GM10248 (cell line): ENCODE measurements at regions of chr7 and their contacts with region 1.

Region 1: DNA sequence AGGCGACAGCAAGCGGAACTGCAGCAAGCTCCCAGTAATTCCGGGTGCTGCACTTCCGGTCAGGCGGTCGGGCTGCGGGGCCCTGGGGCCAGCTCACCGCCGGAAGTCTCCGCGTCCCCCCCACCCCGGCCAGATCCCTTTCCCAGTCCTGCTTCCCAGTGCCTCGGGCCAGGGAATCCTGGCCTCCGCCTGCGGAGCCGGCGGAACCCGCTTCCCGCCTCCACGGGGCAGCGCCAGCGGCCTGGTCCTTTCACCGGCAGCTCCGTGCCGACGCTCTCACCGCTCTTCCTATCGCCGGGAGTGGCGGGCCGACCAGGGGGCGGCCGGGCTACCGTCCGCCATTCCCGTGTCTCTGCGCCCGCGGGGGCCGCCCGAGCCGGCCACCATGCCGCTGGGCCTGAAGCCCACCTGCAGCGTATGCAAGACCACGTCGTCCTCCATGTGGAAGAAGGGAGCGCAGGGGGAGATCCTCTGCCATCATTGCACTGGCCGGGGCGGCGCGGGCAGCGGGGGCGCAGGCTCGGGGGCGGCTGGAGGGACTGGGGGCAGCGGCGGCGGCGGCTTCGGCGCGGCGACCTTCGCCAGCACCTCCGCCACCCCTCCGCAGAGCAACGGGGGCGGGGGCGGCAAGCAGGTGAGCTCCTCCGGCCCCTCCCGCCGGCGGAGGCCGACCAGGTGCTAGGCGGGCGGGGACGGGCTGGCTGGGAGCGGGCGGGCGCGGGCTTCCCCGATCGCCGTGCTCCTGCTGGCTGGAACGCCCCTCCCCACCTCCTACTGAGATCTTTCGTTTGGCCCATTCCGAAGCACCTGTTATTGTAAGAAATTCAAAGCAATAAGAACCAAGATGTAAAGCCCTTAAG is at the start of gene GATAD1:
- DNase-seq: peak; percentile 90
- CTCF ChIP-seq: peak; percentile 93

Region 2: DNA sequence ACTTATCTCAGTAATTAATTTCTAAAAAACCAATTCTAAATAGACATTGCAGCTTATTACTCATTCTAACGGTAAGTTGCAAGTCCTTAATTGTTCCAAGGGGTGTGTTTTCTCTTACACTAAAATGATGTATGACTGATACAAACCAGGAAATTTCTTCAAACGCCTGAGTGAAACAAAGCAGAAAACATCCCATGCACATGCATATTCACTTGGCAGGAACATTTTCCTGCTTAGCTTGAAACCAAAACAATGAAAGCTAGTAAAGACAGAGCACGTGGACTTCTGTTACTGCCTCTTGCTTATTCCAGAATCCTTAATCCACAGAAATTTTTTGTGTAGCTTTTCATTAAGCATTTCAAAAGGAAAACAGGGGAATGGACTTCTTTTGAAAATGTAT is 754.8 kb before region 1 on chr7:
- CTCF ChIA-PET with region 1: no interaction called
- POLR2A ChIA-PET with region 1: no interaction called
- DNase-seq: no peak
- CTCF ChIP-seq: no peak

Region 3: DNA sequence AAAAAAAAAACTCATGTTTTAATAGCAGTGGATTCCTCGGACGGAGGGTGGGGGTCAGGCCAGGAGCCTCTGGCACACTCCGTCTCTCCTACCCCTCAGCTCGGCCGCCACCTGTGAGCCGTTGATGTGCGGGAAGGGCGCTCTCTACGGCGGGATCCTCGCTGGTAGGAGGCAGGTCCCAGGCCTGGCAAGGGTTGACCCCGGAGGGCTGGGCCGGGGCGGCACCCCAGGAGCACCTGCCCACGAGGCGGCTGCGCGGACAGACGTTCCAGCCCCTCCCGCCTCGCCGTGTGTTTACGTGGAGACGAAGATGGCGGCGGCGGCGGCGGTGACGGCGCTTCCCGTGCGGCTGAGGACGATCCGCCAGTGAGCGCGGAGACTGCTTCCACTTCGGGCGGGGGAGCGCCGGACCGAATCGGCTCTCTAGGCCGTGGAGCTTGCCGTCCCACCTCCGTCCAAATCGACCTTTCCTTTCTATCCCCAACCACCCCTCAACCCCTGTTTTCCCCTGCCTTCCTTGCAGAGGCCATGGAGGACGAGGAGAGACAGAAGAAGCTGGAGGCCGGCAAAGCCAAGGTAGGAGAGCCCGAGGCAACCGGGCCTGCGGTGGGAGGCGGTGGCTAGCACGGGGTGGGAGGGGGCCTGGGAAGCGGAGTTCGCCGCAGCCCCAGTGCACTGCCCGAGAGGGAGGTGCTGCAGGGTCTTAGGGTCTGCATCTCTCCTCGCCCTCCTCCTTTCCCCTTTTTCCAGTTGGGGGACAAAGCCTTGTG is 506.8 kb before region 1 on chr7 and contains the start of gene AKAP9:
- CTCF ChIA-PET with region 1: interaction called, 10 read pairs
- POLR2A ChIA-PET with region 1: no interaction called
- DNase-seq: peak; percentile 92
- CTCF ChIP-seq: peak; percentile 5

Region 4: DNA sequence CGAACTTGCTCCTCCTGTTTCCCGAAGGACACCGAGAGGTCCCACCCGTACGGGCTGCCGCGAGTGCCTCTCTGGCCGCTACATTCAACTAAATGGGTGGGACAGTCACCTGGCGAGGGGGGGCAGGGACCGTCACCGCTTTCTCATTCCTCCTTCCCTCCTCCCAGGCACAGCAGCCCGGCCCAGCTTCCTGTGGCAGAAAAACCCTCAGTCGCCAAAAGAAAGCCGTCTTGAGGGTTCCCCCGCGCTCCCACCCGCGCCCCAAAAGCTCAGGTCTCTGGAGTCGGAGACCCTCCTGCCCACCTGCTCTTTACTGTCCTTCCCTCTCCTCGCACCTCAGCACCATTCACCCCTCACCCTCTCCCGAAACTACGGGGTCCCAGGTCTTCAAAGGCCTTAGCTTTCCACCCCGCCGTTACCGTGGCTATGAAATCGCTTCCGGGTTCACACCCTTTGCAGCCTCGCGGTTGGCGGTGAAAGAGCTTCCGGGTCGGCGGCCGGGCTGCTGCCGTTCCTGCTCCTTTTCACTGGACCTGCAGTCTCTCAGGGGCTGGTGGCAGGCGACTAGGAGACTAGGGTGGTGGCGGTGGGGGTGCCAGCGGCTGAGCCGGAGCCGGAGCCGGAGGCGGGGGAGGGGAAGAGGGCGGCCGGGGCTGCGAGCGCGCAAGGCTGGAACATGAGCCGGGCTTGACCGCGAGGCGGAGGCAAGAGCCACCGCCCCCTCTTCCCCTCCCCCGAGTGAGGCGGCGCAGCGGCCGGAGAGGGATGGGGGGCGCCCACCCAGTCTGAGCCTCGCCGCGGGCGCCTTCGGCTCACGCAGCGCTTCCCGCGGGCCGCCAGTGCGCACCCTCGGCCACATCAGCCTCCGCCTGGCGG is 201.8 kb before region 1 on chr7 and contains the starts of genes ANKIB1 and KRIT1:
- CTCF ChIA-PET with region 1: interaction called, 13 read pairs
- POLR2A ChIA-PET with region 1: interaction called, 5 read pairs
- DNase-seq: peak; percentile 89
- CTCF ChIP-seq: peak; percentile 20

Region 5: DNA sequence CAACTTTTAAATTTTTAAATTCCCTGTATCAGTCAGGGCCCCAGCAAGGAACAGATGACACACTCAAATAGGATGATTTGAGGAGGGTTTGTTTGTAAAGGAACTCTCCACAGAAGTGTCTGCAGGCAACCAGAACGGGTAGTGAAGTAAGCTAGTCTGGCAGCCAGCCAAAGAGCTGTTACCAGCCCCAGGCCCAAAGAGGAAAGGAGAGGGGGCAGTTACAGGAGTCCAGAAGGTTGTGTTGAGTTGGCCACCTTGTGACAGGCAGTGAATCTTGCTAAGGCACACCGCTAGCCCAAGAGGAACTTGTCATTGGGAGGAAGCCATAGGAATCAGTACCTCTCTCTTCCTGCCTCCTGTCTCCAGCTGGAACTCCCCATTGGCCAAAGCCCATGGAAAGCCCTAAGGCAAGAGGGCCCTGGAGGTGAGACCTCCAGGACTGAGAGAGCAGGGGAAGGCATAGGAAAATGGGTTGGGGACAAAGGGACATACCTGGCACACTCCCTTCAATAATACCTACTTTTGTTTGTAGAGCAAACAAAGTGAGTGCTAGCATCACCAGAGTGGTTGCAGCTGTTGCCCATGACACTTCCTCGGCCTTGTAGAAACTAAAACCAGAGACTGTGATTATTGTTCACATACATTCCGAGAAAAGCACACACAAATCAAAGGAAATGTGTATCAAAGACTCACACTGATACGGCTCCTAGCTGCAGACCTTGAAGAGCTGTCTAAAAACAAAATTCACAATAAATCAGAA is 25.7 kb before region 1 on chr7:
- CTCF ChIA-PET with region 1: interaction called, 126 read pairs
- POLR2A ChIA-PET with region 1: interaction called, 3 read pairs
- DNase-seq: no peak
- CTCF ChIP-seq: no peak

Region 6: GRCh38 chr7:92461027-92462003 is 13.7 kb after region 1 on chr7:
- CTCF ChIA-PET with region 1: interaction called, 54 read pairs
- POLR2A ChIA-PET with region 1: no interaction called
- DNase-seq: peak; percentile 44
- CTCF ChIP-seq: peak; percentile 60